IMR-90 (cell line): ENCODE measurements at regions of chr4 and their contacts with region 1.

Region 1: GRCh38 chr4:133154725-133155124 is 5.6 kb downstream of the PCDH10 start:
- DNase-seq: peak; percentile 41
- ATAC-seq: peak; percentile 57; the same call in 1 of the 2 replicates
- H3K4me3 ChIP-seq: no peak overlapping the region
- H3K27ac ChIP-seq: no peak overlapping the region
- H3K4me1 ChIP-seq: peaks cover 2% of the 10 kb centered on the region; the same call in 1 of the 2 replicates
- H3K27me3 ChIP-seq: peaks cover 35% of the 10 kb centered on the region
- CTCF ChIP-seq: peak; percentile 69
- POLR2A ChIP-seq: no peak
- RAD21 ChIP-seq: peak; percentile 61

Region 2: GRCh38 chr4:133287396-133287795 is 132.7 kb after region 1 on chr4:
- CTCF ChIA-PET with region 1: no interaction called
- POLR2A ChIA-PET with region 1: no interaction called
- dilution Hi-C with region 1: no loop called
- in situ Hi-C with region 1: no loop called
- intact Hi-C with region 1: no loop called
- DNase-seq: no peak
- ATAC-seq: no peak
- H3K4me3 ChIP-seq: no peak overlapping the region
- H3K27ac ChIP-seq: no peak overlapping the region
- H3K4me1 ChIP-seq: no peaks in the 10 kb centered on the region
- H3K27me3 ChIP-seq: no peaks in the 10 kb centered on the region
- CTCF ChIP-seq: no peak
- POLR2A ChIP-seq: no peak
- RAD21 ChIP-seq: no peak

Region 3: DNA sequence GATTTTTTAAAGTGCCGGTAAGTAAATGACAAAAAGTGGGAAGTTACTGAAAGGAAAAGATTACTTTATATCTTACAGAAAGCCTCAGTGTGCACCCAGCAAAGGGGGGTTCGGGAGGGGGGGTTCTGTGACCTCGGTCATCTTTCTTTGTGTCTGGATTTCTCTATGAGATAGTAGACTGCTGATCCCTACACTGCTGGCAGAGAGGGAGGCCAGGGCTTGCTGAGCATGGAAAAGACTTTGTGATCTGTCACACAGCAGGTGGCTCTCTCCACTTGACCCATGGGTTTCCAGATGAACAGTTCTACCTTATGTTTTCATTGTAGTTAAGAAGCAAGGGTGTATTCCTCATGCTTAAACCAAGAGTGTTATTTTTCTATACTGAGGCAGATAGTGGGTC is 470.0 kb after region 1 on chr4:
- CTCF ChIA-PET with region 1: no interaction called
- POLR2A ChIA-PET with region 1: no interaction called
- dilution Hi-C with region 1: no loop called
- in situ Hi-C with region 1: no loop called
- intact Hi-C with region 1: loop called (anchors 1 kb)
- DNase-seq: no peak
- ATAC-seq: no peak
- H3K4me3 ChIP-seq: no peak overlapping the region
- H3K27ac ChIP-seq: no peak overlapping the region
- H3K4me1 ChIP-seq: no peaks in the 10 kb centered on the region
- H3K27me3 ChIP-seq: no peaks in the 10 kb centered on the region
- CTCF ChIP-seq: no peak
- POLR2A ChIP-seq: no peak
- RAD21 ChIP-seq: no peak

Region 4: GRCh38 chr4:133839326-133839725 is 684.6 kb after region 1 on chr4:
- CTCF ChIA-PET with region 1: no interaction called
- POLR2A ChIA-PET with region 1: no interaction called
- dilution Hi-C with region 1: no loop called
- in situ Hi-C with region 1: no loop called
- intact Hi-C with region 1: loop called (anchors 5 kb)
- DNase-seq: peak; percentile 12
- ATAC-seq: no peak
- H3K4me3 ChIP-seq: no peak overlapping the region
- H3K27ac ChIP-seq: no peak overlapping the region
- H3K4me1 ChIP-seq: no peaks in the 10 kb centered on the region
- H3K27me3 ChIP-seq: no peaks in the 10 kb centered on the region
- CTCF ChIP-seq: peak; percentile 35
- POLR2A ChIP-seq: no peak
- RAD21 ChIP-seq: peak; percentile 33

Region 5: DNA sequence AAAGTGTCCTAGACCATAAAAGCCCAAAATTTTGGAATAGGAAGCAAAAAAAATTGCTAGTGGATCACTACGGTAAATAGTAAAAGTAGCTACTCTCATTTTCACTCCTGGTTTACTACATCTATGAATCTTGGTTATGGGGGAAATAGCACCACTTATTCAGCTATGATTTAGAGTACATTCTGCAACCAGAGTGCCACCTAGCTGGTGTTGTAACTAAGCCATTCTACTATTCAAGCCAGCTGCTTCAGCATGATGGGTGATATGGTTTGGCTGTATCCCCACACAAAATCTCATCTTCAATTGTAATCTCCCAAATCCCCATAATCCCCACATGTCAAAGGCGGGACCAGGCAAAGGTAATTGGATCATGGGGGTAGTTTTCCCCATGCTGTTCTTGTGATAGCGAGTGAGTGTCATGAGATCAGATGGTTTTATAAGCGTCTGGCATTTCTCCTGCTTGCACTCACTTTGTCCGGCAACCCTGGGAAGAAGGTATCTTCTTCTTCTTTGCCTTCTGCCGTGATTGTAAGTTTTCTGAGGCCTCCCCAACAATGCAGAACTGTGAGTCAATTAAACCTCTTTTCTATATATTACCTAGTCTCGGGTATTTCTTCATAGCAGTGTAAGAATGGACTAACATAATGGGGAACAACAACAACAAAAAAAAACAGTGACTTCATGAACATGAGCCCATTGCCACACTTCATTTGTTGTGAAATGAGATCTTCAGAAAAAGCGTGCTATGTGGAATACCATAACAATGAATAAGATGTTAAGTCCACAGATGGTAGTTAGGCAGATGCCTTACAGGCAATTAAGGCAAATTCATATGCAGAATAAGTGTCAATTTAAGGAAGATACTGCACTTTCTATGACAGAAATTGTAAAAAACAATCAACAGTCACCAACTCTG is 766.8 kb after region 1 on chr4:
- CTCF ChIA-PET with region 1: no interaction called
- POLR2A ChIA-PET with region 1: no interaction called
- dilution Hi-C with region 1: no loop called
- in situ Hi-C with region 1: no loop called
- intact Hi-C with region 1: loop called (anchors 2 kb)
- DNase-seq: peak; percentile 34
- ATAC-seq: no peak
- H3K4me3 ChIP-seq: no peak overlapping the region
- H3K27ac ChIP-seq: no peak overlapping the region
- H3K4me1 ChIP-seq: no peaks in the 10 kb centered on the region
- H3K27me3 ChIP-seq: no peaks in the 10 kb centered on the region
- CTCF ChIP-seq: peak; percentile 46
- POLR2A ChIP-seq: no peak
- RAD21 ChIP-seq: peak; percentile 46